Caco-2 (cell line): ENCODE measurements at regions of chr9 and their contacts with region 1.

Region 1: DNA sequence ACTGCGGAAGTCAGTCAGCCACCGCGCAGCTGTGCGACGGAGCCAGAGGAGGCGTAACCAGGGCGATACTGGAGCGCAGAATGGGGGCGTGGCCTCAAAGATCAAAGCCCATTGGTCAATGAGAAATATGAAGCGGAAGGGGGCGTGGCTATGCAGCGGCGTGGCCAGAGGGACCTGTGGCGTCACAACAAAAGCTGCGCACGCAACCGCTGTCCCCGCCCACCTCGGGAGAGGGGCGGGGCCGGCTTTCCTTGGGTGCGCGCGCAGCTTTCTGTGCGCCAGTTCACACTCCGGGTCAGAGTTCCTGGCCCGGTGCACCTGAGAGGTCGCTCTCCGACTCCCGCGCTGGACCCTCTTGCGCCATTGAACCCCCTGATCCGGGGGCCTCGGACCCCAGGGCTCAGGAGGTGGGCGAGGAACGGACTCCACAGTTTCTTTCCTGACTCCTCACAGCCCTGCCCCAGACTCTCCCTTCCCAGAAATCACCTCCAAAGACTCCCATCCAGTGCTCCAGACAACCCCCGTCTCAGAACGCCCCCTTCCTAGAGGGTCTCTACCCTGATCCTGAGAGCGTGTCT is at the starts of genes GOLGA2 and SWI5:
- DNase-seq: peak; percentile 99 to 100
- H3K4me3 ChIP-seq: peak within 1 kb of the TSS; percentile 88
- H3K4me3 Mint-ChIP-seq: peak within 1 kb of the TSS; percentile 98
- H3K27ac Mint-ChIP-seq: peak within 1 kb of the TSS; percentile 97
- H3K4me1 ChIP-seq: peaks cover 5% of the 10 kb centered on the region
- H3K4me1 Mint-ChIP-seq: peaks cover 30% of the 10 kb centered on the region
- H3K27me3 ChIP-seq: no peaks in the 10 kb centered on the region
- H3K27me3 Mint-ChIP-seq: peaks cover 2% of the 10 kb centered on the region
- CTCF ChIP-seq: no peak
- total RNA-seq, gene GOLGA2: 97.7 and 102 TPM in 2 replicates
- total RNA-seq, gene SWI5: 18.0 and 19.8 TPM in 2 replicates

Region 2: GRCh38 chr9:128249908-128250838 is 25.9 kb before region 1 on chr9:
- CTCF ChIA-PET with region 1: interaction called, 7 read pairs
- POLR2A ChIA-PET with region 1: interaction called, 15 read pairs
- intact Hi-C with region 1: loop called (anchors 1 kb)
- DNase-seq: peak; percentile 97 to 99
- H3K4me3 ChIP-seq: peak overlapping the region; percentile 73
- H3K4me3 Mint-ChIP-seq: peak overlapping the region; percentile 75
- H3K27ac Mint-ChIP-seq: no peak overlapping the region
- H3K4me1 ChIP-seq: peaks cover 7% of the 10 kb centered on the region; the same call in 1 of the 2 replicates
- H3K4me1 Mint-ChIP-seq: peaks cover 13% of the 10 kb centered on the region
- H3K27me3 ChIP-seq: no peaks in the 10 kb centered on the region
- H3K27me3 Mint-ChIP-seq: no peaks in the 10 kb centered on the region
- CTCF ChIP-seq: no peak

Region 3: DNA sequence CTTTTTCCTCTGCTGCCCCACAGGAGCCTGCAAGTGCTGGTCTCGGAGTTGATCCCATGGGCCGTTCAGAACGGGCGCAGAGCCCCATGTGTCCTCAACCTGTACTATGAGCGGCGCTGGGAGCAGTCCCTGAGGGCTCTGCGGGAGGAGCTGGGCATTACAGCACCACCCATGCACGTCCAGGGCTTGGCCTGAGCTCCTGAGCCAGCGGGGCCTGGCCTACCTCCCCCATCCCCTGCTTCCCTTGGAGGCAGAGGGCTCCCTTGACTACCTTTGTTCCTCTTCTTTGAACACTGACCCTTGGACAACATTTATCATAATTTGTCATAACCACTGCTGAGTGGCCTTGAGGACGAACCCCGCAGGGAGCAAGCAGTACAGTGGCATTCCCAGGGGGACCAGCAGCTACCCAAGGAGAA is 57.4 kb after region 1 on chr9:
- CTCF ChIA-PET with region 1: no interaction called
- POLR2A ChIA-PET with region 1: no interaction called
- intact Hi-C with region 1: no loop called
- DNase-seq: peak; percentile 29 to 63
- H3K4me3 ChIP-seq: no peak overlapping the region
- H3K4me3 Mint-ChIP-seq: no peak overlapping the region
- H3K27ac Mint-ChIP-seq: no peak overlapping the region
- H3K4me1 ChIP-seq: peaks cover 23% of the 10 kb centered on the region
- H3K4me1 Mint-ChIP-seq: no peaks in the 10 kb centered on the region
- H3K27me3 ChIP-seq: no peaks in the 10 kb centered on the region
- H3K27me3 Mint-ChIP-seq: no peaks in the 10 kb centered on the region
- CTCF ChIP-seq: no peak